ENCODE measurements at regions of chr6 and their contacts with region 1.

Region 1: DNA sequence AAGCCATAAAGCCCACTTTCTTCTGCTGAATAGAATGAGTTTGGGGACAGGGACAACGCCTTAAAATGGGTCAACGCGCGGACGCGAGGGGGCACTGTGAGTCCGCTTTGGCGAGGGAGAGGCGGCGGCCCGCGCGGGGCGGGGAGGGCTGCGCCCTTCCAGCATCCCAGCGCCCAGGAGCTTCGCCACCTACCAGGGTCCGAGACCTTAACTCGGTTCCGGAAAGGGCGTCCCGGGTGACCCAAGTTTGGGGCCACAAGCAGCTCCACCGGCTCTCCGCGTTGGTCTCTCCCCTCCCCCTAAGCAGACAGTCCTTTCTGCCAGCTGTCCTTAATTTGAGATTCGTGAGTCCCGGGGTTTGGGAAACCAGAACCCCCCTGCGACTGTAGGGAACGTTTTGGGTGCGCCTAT is 1.8 kb upstream of the SAMD5 start:
- DNase-seq: peak; percentile 80 to 91 (median 89)
- ATAC-seq: peak; percentile 78 to 83
- H3K4me3 ChIP-seq: peak overlapping the region; percentile 86
- H3K27ac ChIP-seq: no peak overlapping the region
- H3K4me1 ChIP-seq: no peaks in the 10 kb centered on the region
- H3K27me3 ChIP-seq: no peaks in the 10 kb centered on the region

Region 2: GRCh38 chr6:147642458-147642857 is 135.7 kb after region 1 on chr6:
- intact Hi-C with region 1: loop called in 1 of 4 experiments (anchors 10 kb)
- DNase-seq: no peak
- ATAC-seq: no peak
- H3K4me3 ChIP-seq: no peak overlapping the region
- H3K27ac ChIP-seq: no peak overlapping the region
- H3K4me1 ChIP-seq: no peaks in the 10 kb centered on the region
- H3K27me3 ChIP-seq: no peaks in the 10 kb centered on the region

Region 3: GRCh38 chr6:147651249-147652063 is 144.7 kb after region 1 on chr6:
- intact Hi-C with region 1: loop called in 3 of 4 experiments (anchors 2 to 10 kb)
- DNase-seq: peak; percentile 40 to 53 (median 48)
- ATAC-seq: peak; percentile 94 to 96
- H3K4me3 ChIP-seq: no peak overlapping the region
- H3K27ac ChIP-seq: no peak overlapping the region
- H3K4me1 ChIP-seq: peaks cover 5% of the 10 kb centered on the region
- H3K27me3 ChIP-seq: no peaks in the 10 kb centered on the region

Region 4: GRCh38 chr6:148166339-148166968 is 659.7 kb after region 1 on chr6:
- intact Hi-C with region 1: loop called (anchors 2 to 5 kb)
- DNase-seq: no peak
- ATAC-seq: peak; percentile 45 to 54
- H3K4me3 ChIP-seq: no peak overlapping the region
- H3K27ac ChIP-seq: no peak overlapping the region
- H3K4me1 ChIP-seq: no peaks in the 10 kb centered on the region
- H3K27me3 ChIP-seq: no peaks in the 10 kb centered on the region

Measured in right cardiac atrium (tissue), 5 donors.